Activated CD4-positive, alpha-beta T cell treated with anti-CD3 and anti-CD28 coated beads, Interleukin-2, amount 10 ng/mL, durations not matched to agents 24 days and 14 days (primary cell): ENCODE measurements at regions of chr12 and their contacts with region 1.

Region 1: DNA sequence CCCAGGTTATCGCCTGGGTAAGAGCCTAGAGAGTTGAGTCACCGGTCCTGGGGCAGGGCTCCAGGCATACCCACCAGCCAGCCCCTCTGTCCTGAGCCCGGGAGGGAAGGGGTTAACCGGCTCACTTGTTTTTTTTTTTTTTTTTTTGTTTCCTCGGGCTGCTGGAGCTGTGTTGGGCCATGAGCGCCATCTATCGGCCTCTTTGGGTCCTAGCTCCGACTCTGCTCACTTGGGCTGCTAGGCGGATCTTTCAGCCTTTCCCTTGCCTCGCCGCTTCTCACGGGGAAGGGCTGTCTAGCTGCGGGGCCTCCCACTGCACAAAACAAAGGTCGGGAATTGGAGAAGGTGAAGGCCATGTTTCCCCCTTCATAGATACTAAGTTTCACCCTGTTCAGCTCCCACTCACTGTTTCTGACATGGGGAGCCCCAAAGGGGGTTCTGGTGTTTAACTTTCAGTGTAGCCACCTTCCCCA is 2.8 kb upstream of the SMUG1 start:
- DNase-seq: peak; percentile 93
- H3K4me3 Mint-ChIP-seq: no peak overlapping the region
- H3K27ac Mint-ChIP-seq: no peak overlapping the region
- H3K4me1 Mint-ChIP-seq: peaks cover 19% of the 10 kb centered on the region
- H3K27me3 Mint-ChIP-seq: peaks cover 43% of the 10 kb centered on the region

Region 2: DNA sequence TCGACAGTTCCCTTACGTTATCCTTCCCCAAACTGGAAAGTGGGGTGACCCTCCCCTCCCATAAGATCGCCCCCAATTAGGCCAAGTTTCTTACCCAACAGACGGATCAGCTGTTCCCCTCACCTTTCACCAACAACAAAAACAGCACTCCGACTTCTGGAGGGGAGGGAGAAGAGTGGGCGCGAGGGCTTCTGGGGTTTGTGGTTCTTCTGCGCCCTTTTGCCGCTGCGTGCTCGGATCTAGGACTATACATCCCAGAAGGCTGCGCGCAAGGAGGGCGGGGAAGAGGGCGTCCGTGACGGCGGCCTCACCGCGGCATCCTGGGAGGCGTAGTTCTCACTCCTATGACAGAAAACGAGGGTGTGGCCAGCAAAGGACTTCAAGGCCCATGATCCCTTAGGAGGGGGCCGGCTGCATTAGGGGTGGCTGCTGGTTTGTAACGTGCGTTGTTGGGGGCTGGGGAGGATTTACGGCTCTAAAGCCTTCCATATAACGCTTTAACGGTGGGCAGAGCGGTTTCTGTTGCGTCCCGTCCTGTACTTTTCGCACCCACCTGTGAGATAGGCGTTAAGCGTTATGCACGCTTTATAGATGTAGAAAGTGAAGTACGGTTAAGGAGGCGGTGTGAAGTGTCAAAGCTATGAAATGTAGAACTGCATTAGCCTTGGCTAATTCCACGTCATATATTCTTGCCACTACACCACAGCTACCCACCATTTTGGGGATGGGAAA is 464.1 kb before region 1 on chr12 and contains the start of gene CALCOCO1:
- intact Hi-C with region 1: loop called (anchors 1 kb)
- DNase-seq: peak; percentile 99
- H3K4me3 Mint-ChIP-seq: peak within 1 kb of the TSS; percentile 95
- H3K27ac Mint-ChIP-seq: peak within 1 kb of the TSS; percentile 90
- H3K4me1 Mint-ChIP-seq: peaks cover 26% of the 10 kb centered on the region
- H3K27me3 Mint-ChIP-seq: peaks cover 2% of the 10 kb centered on the region
- total RNA-seq, gene CALCOCO1: 14.5 and 15.2 TPM in 2 replicates

Region 3: GRCh38 chr12:54005853-54006686 is 185.5 kb before region 1 on chr12:
- intact Hi-C with region 1: loop called (anchors 1 kb)
- DNase-seq: peak; percentile 95
- H3K4me3 Mint-ChIP-seq: peak overlapping the region; percentile 85
- H3K27ac Mint-ChIP-seq: peak overlapping the region; percentile 20
- H3K4me1 Mint-ChIP-seq: peaks cover 29% of the 10 kb centered on the region
- H3K27me3 Mint-ChIP-seq: peaks cover 93% of the 10 kb centered on the region

Region 4: DNA sequence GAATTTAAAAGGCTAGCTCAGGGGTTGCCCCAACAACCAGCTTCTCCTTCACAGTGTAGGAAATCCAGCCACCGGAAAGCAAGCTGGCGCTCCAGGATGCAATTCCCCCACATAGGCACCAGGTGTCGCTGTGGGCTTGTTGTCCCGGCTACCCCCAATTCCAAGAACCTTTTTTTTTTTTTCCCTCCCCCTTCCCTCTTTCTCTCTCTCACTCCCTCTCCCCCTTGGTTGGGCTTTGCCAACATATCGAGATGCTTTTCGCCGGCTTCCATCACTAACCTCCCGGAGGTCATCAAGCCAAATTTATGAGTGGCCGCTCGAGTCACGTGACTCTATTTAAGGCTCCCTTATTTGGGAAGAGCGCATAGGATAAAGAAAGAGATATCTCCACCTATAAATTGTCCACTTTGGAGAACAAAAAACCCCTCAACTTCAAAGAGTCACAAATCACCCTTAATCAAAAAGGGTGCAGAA is 158.9 kb before region 1 on chr12 and contains the start of gene HOXC5:
- intact Hi-C with region 1: loop called (anchors 1 kb)
- DNase-seq: peak; percentile 90
- H3K4me3 Mint-ChIP-seq: peak within 1 kb of the TSS; percentile 69
- H3K27ac Mint-ChIP-seq: peak within 1 kb of the TSS; percentile 59
- H3K4me1 Mint-ChIP-seq: peaks cover 19% of the 10 kb centered on the region
- H3K27me3 Mint-ChIP-seq: peaks cover 83% of the 10 kb centered on the region
- total RNA-seq, gene HOXC5: not detected in 2 replicates

Region 5: DNA sequence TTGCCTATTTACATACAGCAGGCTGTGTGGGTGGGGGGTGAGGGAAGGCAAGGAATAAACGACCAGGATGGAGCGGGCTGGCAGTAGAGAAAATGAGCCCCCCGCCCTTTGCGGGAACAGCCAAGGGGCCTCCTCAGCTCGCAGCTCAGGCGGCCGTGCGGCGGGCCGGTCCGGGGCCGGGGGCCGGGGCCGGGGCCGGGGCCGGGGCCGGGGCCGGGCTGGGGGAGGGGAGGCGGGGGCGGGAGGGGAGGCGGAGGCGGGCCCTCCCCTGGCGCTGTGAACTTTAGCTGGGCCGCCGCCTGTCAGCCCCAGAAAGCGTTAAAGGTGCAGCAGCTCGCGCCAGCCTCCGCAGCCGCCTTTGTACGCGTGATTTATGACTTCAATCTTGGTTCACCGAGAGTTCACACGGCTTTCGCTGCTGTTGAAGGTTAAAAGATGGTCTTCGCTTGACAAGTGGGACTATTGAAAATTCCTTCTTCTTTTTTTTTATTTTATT is 109.1 kb before region 1 on chr12:
- intact Hi-C with region 1: loop called (anchors 5 kb)
- DNase-seq: peak; percentile 79
- H3K4me3 Mint-ChIP-seq: peak overlapping the region; percentile 87
- H3K27ac Mint-ChIP-seq: peak overlapping the region; percentile 87
- H3K4me1 Mint-ChIP-seq: peaks cover 27% of the 10 kb centered on the region
- H3K27me3 Mint-ChIP-seq: peaks cover 19% of the 10 kb centered on the region

Region 6: DNA sequence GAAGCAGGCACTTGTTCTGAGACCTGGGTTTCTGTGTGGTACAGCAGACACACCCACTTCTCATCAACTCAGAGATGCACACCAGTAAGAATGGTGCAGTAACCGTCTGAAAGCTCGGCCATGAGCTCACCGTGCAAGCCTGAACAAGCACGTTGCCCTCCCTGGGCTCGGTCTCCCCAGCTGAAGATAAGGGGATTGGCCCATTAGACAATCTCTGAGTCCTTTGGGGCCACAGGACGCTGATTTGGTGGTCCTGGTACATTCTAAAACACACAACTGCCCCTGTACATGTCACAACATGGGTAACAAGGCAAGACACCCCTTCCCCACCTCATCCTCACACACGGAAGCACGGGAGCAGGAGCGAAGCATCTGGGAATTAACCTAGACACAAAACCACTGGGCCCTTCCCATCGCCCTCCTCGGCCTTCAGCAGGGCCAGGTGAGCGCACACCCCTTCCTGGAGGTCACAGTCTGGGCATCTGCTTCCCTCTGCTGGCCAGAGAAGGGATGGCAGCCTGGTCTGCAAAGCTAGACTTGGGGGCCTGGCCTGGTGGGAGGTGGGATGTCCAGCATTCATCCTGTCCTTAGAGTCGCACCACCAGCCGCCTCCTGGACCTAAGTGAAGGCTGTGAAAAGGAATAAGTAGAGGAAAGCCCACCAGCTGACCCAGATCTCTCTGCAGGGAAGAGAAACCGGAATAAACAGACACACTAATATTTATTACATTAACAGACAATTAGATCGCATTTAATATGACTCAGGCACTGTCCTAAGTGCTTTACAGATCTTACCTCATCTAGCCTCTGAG is 16.1 kb after region 1 on chr12:
- intact Hi-C with region 1: loop called (anchors 2 kb)
- DNase-seq: peak; percentile 94
- H3K4me3 Mint-ChIP-seq: no peak overlapping the region
- H3K27ac Mint-ChIP-seq: no peak overlapping the region
- H3K4me1 Mint-ChIP-seq: peaks cover 2% of the 10 kb centered on the region
- H3K27me3 Mint-ChIP-seq: peaks cover 44% of the 10 kb centered on the region

Region 7: GRCh38 chr12:54214553-54215406 is 23.2 kb after region 1 on chr12:
- intact Hi-C with region 1: loop called (anchors 2 kb)
- DNase-seq: peak; percentile 97
- H3K4me3 Mint-ChIP-seq: peak overlapping the region; percentile 85
- H3K27ac Mint-ChIP-seq: no peak overlapping the region
- H3K4me1 Mint-ChIP-seq: peaks cover 20% of the 10 kb centered on the region
- H3K27me3 Mint-ChIP-seq: peaks cover 30% of the 10 kb centered on the region